ENCODE measurements at regions of chr17 and their contacts with region 1.

Region 1: GRCh38 chr17:41579484-41580243 is 7.0 kb downstream of the KRT14 start:
- DNase-seq: peak; percentile 90
- H3K4me3 ChIP-seq: no peak overlapping the region
- H3K27ac ChIP-seq: no peak overlapping the region
- H3K4me1 ChIP-seq: peaks cover 0 to 3% of the 10 kb centered on the region in 2 experiments; a peak in 1 of 4 replicates
- H3K27me3 ChIP-seq: no peaks in the 10 kb centered on the region; the same call in 1 of the 2 replicates
- CTCF ChIP-seq: peak; percentile 62
- EP300 ChIP-seq: no peak
- RAD21 ChIP-seq: peak; percentile 75

Region 2: GRCh38 chr17:41559548-41559947 is 20.1 kb before region 1 on chr17:
- CTCF ChIA-PET with region 1: interaction called, 14 read pairs
- POLR2A ChIA-PET with region 1: no interaction called
- DNase-seq: no peak
- H3K4me3 ChIP-seq: no peak overlapping the region
- H3K27ac ChIP-seq: no peak overlapping the region
- H3K4me1 ChIP-seq: no peaks in the 10 kb centered on the region; a peak in 1 of 4 replicates
- H3K27me3 ChIP-seq: peaks cover 30% of the 10 kb centered on the region; the same call in 1 of the 2 replicates
- CTCF ChIP-seq: no peak
- EP300 ChIP-seq: no peak
- RAD21 ChIP-seq: no peak

Region 3: GRCh38 chr17:41567317-41567716 is 12.3 kb before region 1 on chr17:
- CTCF ChIA-PET with region 1: interaction called, 22 read pairs
- POLR2A ChIA-PET with region 1: no interaction called
- DNase-seq: no peak
- H3K4me3 ChIP-seq: no peak overlapping the region
- H3K27ac ChIP-seq: no peak overlapping the region
- H3K4me1 ChIP-seq: no peaks in the 10 kb centered on the region
- H3K27me3 ChIP-seq: peaks cover 35% of the 10 kb centered on the region; the same call in 1 of the 2 replicates
- CTCF ChIP-seq: no peak
- EP300 ChIP-seq: no peak
- RAD21 ChIP-seq: no peak